AG04449 (cell line): ENCODE measurements at regions of chr19 and their contacts with region 1.

Region 1: GRCh38 chr19:1189419-1189818 is 15.4 kb upstream of the SBNO2 start:
- DNase-seq: no peak
- H3K4me3 ChIP-seq: no peak overlapping the region
- CTCF ChIP-seq: no peak

Region 2: GRCh38 chr19:1026189-1027019 is 163.0 kb before region 1 on chr19 and contains the start of gene CNN2:
- CTCF ChIA-PET with region 1: interaction called, 19 read pairs
- POLR2A ChIA-PET with region 1: interaction called, 3 read pairs
- DNase-seq: no peak
- H3K4me3 ChIP-seq: peak within 1 kb of the TSS; percentile 96
- CTCF ChIP-seq: no peak

Region 3: DNA sequence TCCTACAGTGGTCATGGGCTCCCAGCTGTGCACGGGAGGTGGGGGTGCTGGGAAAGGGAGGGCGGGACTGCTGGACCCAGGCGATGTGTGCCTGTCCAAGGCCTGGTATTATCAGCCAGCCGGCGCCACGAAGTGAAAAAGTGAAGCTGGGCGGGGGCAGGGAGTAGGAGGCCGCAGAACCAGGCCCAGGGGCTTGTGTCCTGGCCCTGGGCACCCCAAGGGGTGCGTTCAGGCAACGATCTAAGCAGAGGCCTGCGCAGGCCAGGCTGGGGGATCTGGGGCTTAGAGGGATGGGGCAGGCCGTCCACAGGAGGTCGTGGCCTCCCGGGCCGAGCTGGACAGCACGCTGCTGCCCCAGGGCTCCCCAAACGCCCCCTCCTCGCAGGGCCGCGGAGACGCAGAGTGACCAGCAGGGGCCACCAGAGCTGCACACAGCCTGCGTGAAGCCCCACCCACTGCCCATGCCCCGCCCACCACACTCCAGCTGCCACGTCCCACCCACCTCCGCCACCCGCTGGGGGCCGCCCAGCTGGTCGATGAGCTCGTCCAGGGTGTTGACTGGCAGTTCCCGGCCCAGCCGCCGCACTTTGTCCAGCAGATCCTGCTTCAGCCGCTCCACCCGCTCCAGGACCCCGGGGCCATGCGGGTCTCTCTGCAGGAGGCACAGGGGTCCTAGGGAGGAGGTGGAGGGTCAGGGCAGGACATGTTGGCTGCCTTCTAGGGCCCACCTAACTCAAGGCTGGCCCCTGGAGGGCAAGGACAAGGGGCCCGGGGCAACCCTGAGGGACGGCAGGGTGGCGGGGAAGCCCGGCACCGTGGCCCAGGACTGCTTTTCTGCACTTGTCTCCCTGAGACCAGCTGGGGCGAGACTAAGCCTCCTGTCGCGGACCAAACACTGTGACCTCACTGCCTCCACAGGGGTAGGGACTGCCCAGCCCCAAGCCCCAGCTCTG is 76.1 kb before region 1 on chr19:
- CTCF ChIA-PET with region 1: interaction called, 97 read pairs
- POLR2A ChIA-PET with region 1: no interaction called
- DNase-seq: peak; percentile 47
- H3K4me3 ChIP-seq: no peak overlapping the region
- CTCF ChIP-seq: peak; percentile 95

Region 4: GRCh38 chr19:1131738-1132551 is 57.5 kb before region 1 on chr19:
- CTCF ChIA-PET with region 1: interaction called, 21 read pairs
- POLR2A ChIA-PET with region 1: interaction called, 3 read pairs
- DNase-seq: peak; percentile 50
- H3K4me3 ChIP-seq: peak overlapping the region; percentile 75
- CTCF ChIP-seq: no peak

Region 5: GRCh38 chr19:1213391-1214286 is 24.2 kb after region 1 on chr19:
- CTCF ChIA-PET with region 1: interaction called, 12 read pairs
- POLR2A ChIA-PET with region 1: no interaction called
- DNase-seq: no peak
- H3K4me3 ChIP-seq: no peak overlapping the region
- CTCF ChIP-seq: no peak

Region 6: DNA sequence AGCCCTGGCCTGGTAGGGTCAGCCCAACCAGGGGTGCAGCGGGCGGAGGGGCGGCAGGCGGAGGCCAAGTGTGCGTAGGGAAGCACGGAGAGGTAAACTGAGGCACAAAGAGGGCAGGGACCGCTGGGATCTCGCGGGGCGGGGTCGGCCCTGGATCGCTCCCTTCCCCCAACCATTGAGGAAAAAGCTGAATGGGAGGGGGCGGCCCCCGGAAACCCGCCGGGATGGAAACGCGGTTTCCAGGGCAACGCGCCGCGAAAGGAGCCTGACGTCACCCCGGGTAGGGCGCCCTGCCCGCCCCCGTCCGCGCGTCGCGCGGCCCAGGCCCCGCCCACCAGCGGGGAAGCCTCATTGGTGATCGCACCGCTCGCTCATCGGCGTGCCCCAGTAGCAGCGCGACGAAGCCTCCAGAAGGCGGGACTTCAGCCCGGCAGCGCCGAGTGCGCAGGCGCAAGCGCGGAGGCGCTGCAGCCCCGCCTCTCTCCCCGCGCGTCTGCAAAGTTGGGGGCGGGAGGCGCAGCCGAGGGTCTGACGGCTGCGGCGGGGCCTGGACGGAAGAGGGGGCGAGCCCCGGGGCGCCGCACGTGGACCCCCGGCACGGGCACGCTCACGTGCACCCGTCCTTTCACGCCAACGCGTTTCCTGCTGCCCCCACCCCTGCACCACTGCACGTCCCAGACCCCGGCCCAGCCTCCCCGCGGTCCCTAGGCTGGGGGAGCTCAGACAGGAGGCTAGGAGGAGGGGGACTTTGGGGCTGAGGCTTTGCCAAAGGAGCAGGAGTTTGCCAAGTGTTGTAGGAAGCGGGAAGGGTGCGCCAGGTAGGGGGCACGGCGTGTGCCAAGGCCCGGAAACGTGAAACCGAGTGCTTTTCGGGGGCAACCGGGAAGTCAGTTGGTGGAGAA is 71.5 kb after region 1 on chr19:
- CTCF ChIA-PET with region 1: no interaction called
- POLR2A ChIA-PET with region 1: no interaction called
- DNase-seq: no peak
- H3K4me3 ChIP-seq: peak overlapping the region; percentile 69
- CTCF ChIP-seq: no peak